K562 (cell line): ENCODE measurements at regions of chr1 and their contacts with region 1.

Region 1: DNA sequence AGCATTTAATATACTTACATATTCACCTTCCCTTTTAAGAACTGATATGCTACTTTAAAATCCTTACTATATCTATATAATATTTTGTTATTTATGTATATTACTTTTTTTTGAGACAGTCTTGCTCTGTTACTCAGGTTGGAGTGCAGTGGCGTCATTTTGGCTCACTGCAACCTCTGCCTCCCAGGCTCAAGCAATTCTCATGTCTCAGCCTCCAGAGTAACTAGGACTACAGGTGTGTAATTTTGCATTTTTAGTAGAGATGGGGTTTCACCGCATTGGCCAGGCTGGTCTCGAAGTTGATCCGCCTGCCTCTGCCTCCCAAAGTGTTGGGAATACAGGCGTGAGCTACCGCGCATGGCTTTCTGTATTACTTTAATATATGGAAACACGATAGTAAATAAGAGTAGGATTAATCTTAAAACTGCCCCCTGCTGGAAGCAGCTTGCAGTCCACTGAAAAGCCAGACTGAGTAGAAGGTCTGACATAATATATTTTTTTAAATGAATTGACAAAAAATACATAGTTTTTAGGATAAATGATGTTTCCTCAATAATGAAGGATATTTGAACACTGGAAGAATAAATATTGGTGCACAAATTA is 24.4 kb downstream of the RCAN3 start:
- DNase-seq: peak; percentile 41 to 54 (median 45)
- ATAC-seq: peak; percentile 78
- H3K4me3 ChIP-seq: no peak overlapping the region
- H3K27ac ChIP-seq: no peak overlapping the region
- H3K4me1 ChIP-seq: no peaks in the 10 kb centered on the region
- H3K27me3 ChIP-seq: peaks cover 18 to 26% of the 10 kb centered on the region in 2 experiments; a peak in 4 of 5 replicates
- CTCF ChIP-seq: peak; percentile 39 to 77 (median 69); a peak in 5 of 6 replicates
- EP300 ChIP-seq: no peak
- POLR2A ChIP-seq: no peak
- RAD21 ChIP-seq: peak; percentile 38 to 56

Region 2: GRCh38 chr1:24415334-24415909 is 111.6 kb before region 1 on chr1 and contains the start of gene NIPAL3:
- CTCF ChIA-PET with region 1: no interaction called
- POLR2A ChIA-PET with region 1: interaction called, 3 read pairs
- in situ Hi-C with region 1: no loop called
- intact Hi-C with region 1: loop called (anchors 5 kb)
- DNase-seq: peak; percentile 91 to 100 (median 95)
- ATAC-seq: peak; percentile 90
- H3K4me3 ChIP-seq: peak within 1 kb of the TSS; percentile 53
- H3K27ac ChIP-seq: peak within 1 kb of the TSS; percentile 64
- H3K4me1 ChIP-seq: peaks cover 54 to 55% of the 10 kb centered on the region in 2 experiments
- H3K27me3 ChIP-seq: no peaks in the 10 kb centered on the region
- CTCF ChIP-seq: peak; percentile 94 to 97 (median 95)
- EP300 ChIP-seq: peak; percentile 29
- POLR2A ChIP-seq: peak; percentile 64
- RAD21 ChIP-seq: peak; percentile 27 to 65; a peak in 2 of 4 replicates
- polyA plus RNA-seq, gene NIPAL3: 10.5 to 12.2 TPM

Region 3: GRCh38 chr1:24438423-24438901 is 88.6 kb before region 1 on chr1:
- CTCF ChIA-PET with region 1: no interaction called
- POLR2A ChIA-PET with region 1: no interaction called
- in situ Hi-C with region 1: no loop called
- intact Hi-C with region 1: loop called (anchors 2 kb)
- DNase-seq: peak; percentile 41 to 86 (median 63)
- ATAC-seq: peak; percentile 99
- H3K4me3 ChIP-seq: no peak overlapping the region
- H3K27ac ChIP-seq: peak overlapping the region; percentile 2; the same call in 1 of the 3 replicates
- H3K4me1 ChIP-seq: peaks cover 9 to 19% of the 10 kb centered on the region in 2 experiments; a peak in 4 of 5 replicates
- H3K27me3 ChIP-seq: no peaks in the 10 kb centered on the region
- CTCF ChIP-seq: peak; percentile 55 to 59 (median 56)
- EP300 ChIP-seq: peak; percentile 83
- POLR2A ChIP-seq: no peak
- RAD21 ChIP-seq: peak; percentile 42 to 49

Region 4: DNA sequence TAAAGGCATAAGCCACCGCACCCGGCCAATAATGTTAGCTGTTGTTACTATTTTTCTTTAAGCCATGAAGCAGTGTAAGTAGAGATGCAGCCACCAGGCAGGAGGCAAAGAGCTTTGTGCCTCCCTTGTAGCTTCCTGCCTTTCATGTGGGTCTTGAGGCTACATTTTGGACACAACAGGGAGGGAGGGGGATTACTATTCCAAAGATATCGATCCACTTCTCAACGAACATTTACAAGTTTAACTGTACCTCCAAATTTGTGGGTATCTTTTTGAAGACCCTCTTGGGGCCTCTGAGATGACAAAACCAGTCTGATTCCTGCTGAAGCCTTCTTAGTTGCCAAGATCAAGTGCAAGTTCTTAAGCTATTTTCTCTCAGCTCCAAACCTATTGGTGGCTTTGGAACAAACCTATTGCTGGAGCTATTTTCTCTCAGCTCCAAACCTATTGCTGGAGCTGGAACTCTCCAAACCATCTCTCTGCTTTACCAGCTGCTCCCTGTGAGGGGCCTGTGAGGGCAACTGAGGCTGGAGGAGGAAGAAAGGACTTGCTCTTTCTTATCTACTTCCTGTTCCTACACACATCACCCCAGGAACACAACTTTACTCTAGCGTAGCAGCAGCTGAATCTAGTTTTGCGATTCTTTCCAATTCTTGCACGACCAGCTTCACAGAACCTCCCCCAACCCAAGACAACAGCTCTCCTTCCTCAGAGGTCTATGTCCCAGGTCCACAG is 40.5 kb before region 1 on chr1:
- CTCF ChIA-PET with region 1: no interaction called
- POLR2A ChIA-PET with region 1: no interaction called
- in situ Hi-C with region 1: no loop called
- intact Hi-C with region 1: loop called (anchors 5 kb)
- DNase-seq: no peak
- ATAC-seq: no peak
- H3K4me3 ChIP-seq: no peak overlapping the region
- H3K27ac ChIP-seq: no peak overlapping the region
- H3K4me1 ChIP-seq: peaks cover 0 to 6% of the 10 kb centered on the region in 2 experiments; a peak in 3 of 5 replicates
- H3K27me3 ChIP-seq: no peaks in the 10 kb centered on the region
- CTCF ChIP-seq: no peak
- EP300 ChIP-seq: no peak
- POLR2A ChIP-seq: no peak
- RAD21 ChIP-seq: no peak